Activated CD4-positive, alpha-beta T cell treated with anti-CD3 and anti-CD28 coated beads, Interleukin-2, amount 10 ng/mL, durations not matched to agents 24 days and 14 days (primary cell): ENCODE measurements at regions of chr19 and their contacts with region 1.

Region 1: DNA sequence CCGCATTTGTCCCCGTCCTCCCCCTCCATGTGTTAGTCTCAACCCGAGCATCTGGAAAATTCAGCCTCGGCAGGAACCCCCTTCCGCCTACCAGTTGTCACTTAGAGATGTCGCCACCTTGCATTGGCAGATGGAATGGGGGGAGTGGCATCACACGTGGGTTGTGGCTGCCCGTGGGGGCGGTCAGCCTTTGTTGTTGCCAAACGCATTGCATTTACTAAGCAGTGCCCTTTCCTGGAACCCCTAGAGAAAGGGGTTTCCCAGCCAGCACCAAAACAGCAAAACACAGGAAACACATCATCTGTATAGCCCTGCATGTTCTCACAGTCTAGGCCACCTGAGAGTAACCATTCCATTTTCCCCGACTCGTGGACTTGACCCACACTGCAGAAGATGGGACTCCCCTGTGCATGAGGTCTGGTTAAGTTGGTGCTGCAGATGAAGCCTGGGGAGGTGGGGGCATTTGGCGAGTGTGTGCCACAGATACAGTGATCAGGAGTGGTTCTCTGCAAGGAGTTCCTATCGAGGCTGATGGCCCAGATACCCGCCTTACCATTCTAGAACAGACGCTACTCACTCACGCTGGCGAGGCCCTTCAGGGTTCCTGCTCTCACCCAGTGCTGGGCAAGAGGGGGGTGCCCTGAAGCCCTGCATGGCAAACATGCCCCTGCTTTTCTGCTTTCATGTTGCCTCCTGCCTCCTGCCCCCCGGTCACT is 38.3 kb downstream of the TMED1 start:
- DNase-seq: peak; percentile 96
- H3K4me3 Mint-ChIP-seq: peak overlapping the region; percentile 89
- H3K27ac Mint-ChIP-seq: peak overlapping the region; percentile 99
- H3K4me1 Mint-ChIP-seq: peaks cover 41% of the 10 kb centered on the region
- H3K27me3 Mint-ChIP-seq: no peaks in the 10 kb centered on the region

Region 2: DNA sequence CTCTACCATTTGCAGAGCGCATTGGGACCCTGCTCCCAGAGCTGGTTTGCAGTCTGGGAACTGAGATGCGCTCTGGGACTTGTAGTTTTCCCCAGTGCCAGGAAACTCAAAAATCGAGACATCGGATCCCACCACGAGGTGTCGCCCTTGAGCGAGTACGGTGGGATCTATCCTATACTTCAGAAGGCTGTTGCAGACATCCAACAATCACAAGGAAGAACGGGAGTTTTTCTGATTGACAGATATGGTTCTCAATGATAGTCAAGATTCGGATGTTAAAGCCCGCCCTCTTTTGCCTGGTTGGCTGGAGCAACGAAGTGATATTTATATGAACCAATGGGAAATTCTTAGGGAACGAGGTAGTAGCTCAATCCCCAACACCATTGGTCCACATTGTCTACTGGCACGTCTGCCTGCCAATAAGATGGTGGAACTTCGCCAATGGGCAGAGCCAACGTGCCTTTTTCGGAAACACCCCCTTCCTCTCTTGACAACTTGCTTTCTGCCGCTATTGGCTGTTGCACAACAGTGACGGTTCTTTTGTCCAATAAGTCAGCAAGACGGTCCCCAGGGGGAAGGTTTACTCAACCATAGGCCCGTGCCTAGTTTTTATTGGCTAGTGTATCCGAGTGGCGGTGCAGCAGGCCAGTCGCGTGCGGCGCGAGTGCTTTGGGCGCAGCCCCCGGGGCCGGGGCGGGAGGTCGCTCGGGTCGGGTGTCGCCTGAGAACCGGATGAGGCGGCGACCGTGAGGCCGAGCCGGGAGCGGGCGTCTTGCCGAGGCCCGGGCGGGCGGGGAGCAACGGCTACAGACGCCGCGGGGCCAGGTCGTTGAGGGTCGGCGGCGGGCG is 80.1 kb before region 1 on chr19 and contains the start of gene DNM2:
- intact Hi-C with region 1: loop called (anchors 1 kb)
- DNase-seq: peak; percentile 100
- H3K4me3 Mint-ChIP-seq: peak within 1 kb of the TSS; percentile 99
- H3K27ac Mint-ChIP-seq: peak within 1 kb of the TSS; percentile 83
- H3K4me1 Mint-ChIP-seq: peaks cover 22% of the 10 kb centered on the region
- H3K27me3 Mint-ChIP-seq: no peaks in the 10 kb centered on the region
- total RNA-seq, gene DNM2: 198 and 211 TPM in 2 replicates

Region 3: DNA sequence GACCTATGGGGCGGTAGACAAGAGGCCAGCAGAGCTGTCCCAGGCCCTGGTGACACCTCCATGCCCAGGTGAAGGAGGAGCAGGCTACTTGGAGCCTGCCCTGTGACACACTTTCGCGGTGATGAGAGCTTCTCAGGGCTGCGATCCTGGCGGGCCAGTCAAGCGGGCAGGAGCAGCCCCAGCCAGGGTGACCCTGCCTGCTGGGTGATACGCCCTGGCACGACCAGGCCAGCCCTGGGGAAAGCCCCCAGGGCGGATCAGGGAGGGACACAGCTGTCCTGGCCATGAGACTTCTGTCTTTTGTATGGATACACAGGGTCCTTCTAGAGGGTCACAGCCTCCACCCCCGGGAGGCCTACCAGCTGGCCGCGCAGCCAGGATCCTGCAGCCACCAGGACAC is 66.8 kb before region 1 on chr19:
- intact Hi-C with region 1: loop called (anchors 5 kb)
- DNase-seq: no peak
- H3K4me3 Mint-ChIP-seq: no peak overlapping the region
- H3K27ac Mint-ChIP-seq: peak overlapping the region; percentile 90
- H3K4me1 Mint-ChIP-seq: peaks cover 37% of the 10 kb centered on the region
- H3K27me3 Mint-ChIP-seq: no peaks in the 10 kb centered on the region

Region 4: DNA sequence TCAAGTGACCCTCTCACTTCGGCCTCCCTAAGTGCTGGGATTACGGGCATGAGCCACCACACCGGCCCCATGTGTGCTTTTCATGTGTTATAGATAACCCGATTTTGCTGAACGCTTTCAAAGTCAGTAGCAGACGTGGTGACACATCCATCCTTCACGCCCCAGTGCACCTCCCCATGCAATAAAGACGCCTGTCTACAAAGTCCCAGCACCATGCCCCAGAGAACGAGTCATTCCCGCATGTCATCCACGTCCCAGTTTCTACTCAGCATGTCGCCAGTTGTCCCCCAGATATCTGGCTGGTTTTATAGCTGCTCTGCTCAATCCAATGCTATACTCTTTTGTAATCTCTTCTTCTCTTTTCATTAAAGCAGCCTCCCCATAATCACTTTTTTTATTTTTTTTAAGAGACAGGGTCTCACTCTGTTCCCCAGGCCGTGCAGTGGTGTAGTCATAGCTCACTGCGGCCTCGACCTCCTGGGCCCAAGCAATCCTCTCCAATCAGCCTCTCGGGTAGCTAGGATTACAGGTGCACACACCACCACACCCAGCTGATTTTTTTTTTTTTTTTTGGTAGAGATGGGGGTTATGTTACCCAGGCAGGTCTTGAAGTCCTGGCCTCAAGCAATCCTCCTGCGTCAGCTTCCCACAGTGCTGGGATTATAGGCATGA is 37.3 kb before region 1 on chr19:
- intact Hi-C with region 1: loop called (anchors 1 kb)
- DNase-seq: peak; percentile 75
- H3K4me3 Mint-ChIP-seq: peak overlapping the region; percentile 76
- H3K27ac Mint-ChIP-seq: peak overlapping the region; percentile 89
- H3K4me1 Mint-ChIP-seq: peaks cover 74% of the 10 kb centered on the region
- H3K27me3 Mint-ChIP-seq: no peaks in the 10 kb centered on the region

Region 5: GRCh38 chr19:10835754-10836477 is 38.2 kb after region 1 on chr19 and contains the start of gene TMED1:
- intact Hi-C with region 1: loop called (anchors 1 kb)
- DNase-seq: peak; percentile 99
- H3K4me3 Mint-ChIP-seq: peak within 1 kb of the TSS; percentile 98
- H3K27ac Mint-ChIP-seq: peak within 1 kb of the TSS; percentile 99
- H3K4me1 Mint-ChIP-seq: peaks cover 10% of the 10 kb centered on the region
- H3K27me3 Mint-ChIP-seq: no peaks in the 10 kb centered on the region
- total RNA-seq, gene TMED1: 17.6 and 22.4 TPM in 2 replicates

Region 6: DNA sequence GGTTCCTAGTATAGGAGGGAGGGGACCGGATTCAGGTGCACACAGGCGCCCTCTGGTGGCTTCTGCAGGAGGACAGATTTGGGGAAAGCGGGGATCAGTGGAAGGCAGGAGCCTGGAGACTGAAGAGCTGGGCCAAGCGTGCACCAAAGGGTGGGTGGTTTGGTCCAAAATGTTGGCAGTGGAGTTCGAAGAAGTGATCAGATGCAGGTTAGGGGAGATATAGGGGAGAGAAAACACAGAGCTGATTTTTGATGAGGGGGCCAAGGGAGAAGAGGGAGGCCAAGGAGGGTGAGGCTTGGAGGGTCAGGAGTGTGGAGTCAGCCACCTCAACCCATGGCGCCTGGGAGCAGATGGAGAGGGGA is 66.8 kb after region 1 on chr19:
- intact Hi-C with region 1: loop called (anchors 10 kb)
- DNase-seq: peak; percentile 95
- H3K4me3 Mint-ChIP-seq: peak overlapping the region; percentile 8
- H3K27ac Mint-ChIP-seq: peak overlapping the region; percentile 2
- H3K4me1 Mint-ChIP-seq: peaks cover 24% of the 10 kb centered on the region
- H3K27me3 Mint-ChIP-seq: no peaks in the 10 kb centered on the region